ENCODE measurements at regions of chr5 and their contacts with region 1.

Region 1: DNA sequence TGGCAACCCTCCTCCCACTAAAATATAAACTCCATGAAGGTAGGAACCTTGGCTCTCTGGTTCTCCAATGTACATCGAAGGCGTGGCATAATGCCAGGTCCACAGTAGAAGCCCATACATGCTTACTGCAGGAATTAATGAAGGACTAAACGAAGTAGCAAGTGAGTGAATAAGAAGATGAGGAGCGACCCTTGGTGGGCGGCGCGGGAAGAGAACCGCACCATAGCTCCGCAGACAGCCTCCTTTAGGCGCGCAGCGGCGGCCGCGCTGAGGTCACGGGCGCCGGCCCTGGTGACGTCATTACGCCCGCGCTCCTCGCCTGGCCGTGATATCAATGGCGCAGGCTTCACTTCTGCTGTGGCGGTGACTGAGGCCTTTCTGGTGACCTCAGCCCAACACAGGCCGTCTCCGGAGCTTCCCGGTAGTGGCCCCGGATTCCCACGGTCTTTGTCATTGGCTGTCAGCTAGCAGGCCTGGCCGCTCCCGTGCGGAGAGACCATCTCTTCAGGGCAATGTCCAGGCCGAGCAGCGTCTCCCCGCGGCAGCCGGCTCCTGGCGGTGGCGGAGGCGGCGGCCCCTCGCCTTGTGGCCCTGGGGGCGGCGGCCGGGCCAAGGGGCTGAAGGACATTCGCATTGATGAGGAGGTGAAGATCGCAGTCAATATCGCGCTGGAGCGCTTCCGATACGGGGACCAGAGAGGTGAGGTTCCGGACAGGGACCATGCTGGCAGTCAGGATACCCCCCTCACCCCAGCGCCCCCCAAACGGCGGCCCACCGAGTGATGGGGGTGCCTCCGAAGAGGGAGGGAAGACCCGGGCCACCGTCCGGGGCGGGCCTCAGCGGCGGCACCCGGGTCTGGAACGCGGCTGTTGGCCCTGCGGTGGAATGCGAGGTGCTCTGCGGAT is at the start of gene YTHDC2:
- DNase-seq: peak; percentile 82
- H3K4me3 Mint-ChIP-seq: peak within 1 kb of the TSS; percentile 94
- H3K27ac Mint-ChIP-seq: peak within 1 kb of the TSS; percentile 87
- H3K4me1 Mint-ChIP-seq: peaks cover 35% of the 10 kb centered on the region
- H3K27me3 Mint-ChIP-seq: peaks cover 9% of the 10 kb centered on the region
- total RNA-seq, gene YTHDC2: 26.0 and 27.5 TPM in 2 replicates

Region 2: DNA sequence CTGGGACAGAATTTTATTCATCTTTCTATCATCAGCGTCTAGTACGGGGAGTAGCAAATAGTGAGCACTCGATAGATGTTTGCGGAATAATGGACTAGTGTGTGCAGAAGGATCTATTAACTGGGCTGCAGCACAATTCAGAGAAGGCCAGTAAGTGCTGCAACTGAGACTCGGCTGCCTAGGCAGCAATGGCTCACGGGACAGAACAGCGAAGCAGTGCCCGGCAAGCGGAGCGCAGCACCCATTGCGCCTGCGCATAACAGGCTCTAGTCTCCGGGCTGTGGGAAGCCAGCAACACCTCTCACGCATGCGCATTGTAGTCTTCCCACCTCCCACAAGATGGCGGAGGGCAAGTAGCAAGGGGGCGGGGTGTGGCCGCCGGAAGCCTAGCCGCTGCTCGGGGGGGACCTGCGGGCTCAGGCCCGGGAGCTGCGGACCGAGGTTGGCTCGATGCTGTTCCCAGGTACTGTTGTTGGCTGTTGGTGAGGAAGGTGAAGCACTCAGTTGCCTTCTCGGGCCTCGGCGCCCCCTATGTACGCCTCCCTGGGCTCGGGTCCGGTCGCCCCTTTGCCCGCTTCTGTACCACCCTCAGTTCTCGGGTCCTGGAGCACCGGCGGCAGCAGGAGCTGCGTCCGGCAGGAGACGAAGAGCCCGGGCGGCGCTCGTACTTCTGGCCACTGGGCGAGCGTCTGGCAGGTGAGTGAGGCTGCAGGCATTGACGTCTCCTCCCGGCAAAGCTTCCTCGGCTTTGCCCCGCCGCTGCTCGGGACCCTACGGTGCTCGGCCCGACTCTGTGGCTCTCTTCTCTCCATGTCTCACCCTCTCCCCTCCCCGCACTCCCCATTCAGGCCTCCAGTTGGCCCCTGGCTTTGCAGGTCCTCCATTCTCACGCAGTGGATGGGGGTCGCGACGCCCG is 806.2 kb before region 1 on chr5:
- intact Hi-C with region 1: loop called (anchors 1 kb)
- DNase-seq: peak; percentile 96
- H3K4me3 Mint-ChIP-seq: peak overlapping the region; percentile 94
- H3K27ac Mint-ChIP-seq: peak overlapping the region; percentile 81
- H3K4me1 Mint-ChIP-seq: peaks cover 37% of the 10 kb centered on the region
- H3K27me3 Mint-ChIP-seq: peaks cover 8% of the 10 kb centered on the region

Region 3: DNA sequence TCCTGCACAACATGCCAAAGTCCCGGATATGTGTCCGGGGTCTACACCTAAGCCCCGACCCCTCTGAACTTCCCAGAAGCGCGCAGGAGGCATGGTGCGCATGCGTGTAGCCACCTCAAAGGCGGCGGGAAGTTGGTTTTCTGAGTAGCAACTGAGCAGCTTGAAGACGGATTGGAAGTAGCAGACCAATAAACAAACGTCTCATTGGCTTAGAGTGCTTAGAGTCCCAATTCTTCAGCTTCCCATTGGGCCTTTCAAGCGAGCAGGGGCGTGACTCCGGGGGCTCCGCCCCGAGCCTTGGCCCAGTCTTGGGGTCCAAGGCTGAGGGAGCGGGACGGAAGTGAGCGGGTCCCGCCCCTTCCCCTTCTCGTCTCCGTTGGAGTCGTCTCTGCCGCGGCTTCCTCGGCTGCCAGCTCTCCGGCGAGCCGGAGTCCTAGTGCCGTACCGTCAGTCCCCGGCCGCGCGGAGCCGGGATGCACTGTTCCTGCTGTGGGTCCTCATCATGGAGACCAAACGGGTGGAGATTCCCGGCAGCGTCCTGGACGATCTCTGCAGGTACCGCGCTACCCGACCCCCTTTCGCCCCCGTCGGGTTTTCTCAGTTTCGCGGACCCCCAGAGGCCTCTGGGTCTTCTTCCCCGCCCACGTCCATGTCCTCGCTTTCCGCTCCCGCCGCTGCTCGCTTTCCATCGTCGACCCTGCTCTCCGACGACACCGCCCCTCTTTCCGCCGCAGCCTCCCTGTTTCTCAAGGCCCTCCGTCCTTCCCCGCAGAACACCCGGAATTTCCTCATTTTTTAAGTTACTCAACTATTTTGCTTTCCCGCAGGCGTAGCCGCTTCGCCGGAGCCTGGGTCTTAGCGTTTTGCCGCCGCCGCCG is 537.0 kb before region 1 on chr5 and contains the start of gene DCP2:
- intact Hi-C with region 1: loop called (anchors 1 kb)
- DNase-seq: peak; percentile 96
- H3K4me3 Mint-ChIP-seq: peak within 1 kb of the TSS; percentile 93
- H3K27ac Mint-ChIP-seq: peak within 1 kb of the TSS; percentile 93
- H3K4me1 Mint-ChIP-seq: peaks cover 32% of the 10 kb centered on the region
- H3K27me3 Mint-ChIP-seq: no peaks in the 10 kb centered on the region
- total RNA-seq, gene DCP2: 78.9 and 82.5 TPM in 2 replicates

Region 4: GRCh38 chr5:113294311-113295110 is 219.1 kb before region 1 on chr5:
- intact Hi-C with region 1: loop called (anchors 1 kb)
- DNase-seq: peak; percentile 62
- H3K4me3 Mint-ChIP-seq: peak overlapping the region; percentile 89
- H3K27ac Mint-ChIP-seq: peak overlapping the region; percentile 8
- H3K4me1 Mint-ChIP-seq: peaks cover 18% of the 10 kb centered on the region
- H3K27me3 Mint-ChIP-seq: peaks cover 69% of the 10 kb centered on the region

Region 5: GRCh38 chr5:113378959-113379541 is 134.6 kb before region 1 on chr5:
- intact Hi-C with region 1: loop called (anchors 1 kb)
- DNase-seq: peak; percentile 24
- H3K4me3 Mint-ChIP-seq: peak overlapping the region; percentile 24
- H3K27ac Mint-ChIP-seq: no peak overlapping the region
- H3K4me1 Mint-ChIP-seq: peaks cover 36% of the 10 kb centered on the region
- H3K27me3 Mint-ChIP-seq: peaks cover 21% of the 10 kb centered on the region

Measured in activated T-helper 1 cell treated with anti-CD3 and anti-CD28 coated beads, Interleukin-12 subunit alpha, Interleukin-12 subunit beta, Interleukin-2, Interleukin-4 antibody, amounts not matched to agents 30 ng/mL and 10 ng/mL and 1 ng/mL, durations not matched to agents 14 hours and 24 hours and 36 hours (primary cell).